Heart right ventricle (tissue), 16 donors: ENCODE measurements at regions of chr19 and their contacts with region 1.

Region 1: DNA sequence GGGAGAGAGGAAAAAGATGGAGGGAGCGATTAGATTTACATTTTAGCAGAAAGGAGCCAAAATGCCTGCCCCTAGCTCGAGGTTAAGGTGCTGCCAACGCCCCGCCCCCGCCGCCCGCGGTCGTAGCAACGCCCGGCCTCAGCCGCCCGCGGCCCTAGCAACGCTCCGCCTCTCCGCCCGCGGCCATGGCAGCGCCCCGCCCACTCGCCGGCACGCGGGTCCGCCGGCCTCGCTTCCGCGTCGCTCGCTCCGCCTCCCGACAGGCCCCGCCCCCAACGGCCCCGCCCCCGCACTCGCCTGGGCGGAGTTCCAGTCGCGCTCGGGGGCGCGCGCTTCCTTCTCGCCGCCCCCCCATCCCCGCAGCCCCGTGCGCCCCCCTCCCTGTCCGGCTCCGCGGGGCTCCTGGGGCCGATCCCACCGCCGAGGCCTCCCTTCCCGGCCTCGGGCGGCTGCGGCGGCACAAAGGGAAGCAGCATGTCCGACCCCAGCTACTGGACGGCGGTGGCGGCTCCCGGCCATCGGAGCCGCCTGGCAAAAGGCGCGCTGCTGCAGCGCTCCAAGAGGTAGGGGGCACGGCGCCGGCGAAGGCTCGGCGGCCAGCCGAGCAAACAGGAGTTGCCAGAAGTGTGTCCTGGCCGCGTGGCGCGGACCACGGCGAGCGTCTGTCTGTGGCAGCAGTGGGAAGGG is 20.3 kb downstream of the MAST3 start:
- DNase-seq: peak; percentile 88 to 94
- ATAC-seq: peak; percentile 89 to 96 (median 94)
- H3K4me3 ChIP-seq: peak overlapping the region; percentile 21 to 89 (median 78)
- H3K27ac ChIP-seq: peak overlapping the region in 9 of 10 donors; percentile 6 to 84 (median 71)
- H3K4me1 ChIP-seq: peaks cover 4 to 32% (median 22%) of the 10 kb centered on the region in 9 donors
- H3K27me3 ChIP-seq: no peaks in the 10 kb centered on the region
- CTCF ChIP-seq: peak in 2 of 9 donors; percentile 11 to 24

Region 2: GRCh38 chr19:18152444-18152816 is 34.6 kb after region 1 on chr19:
- intact Hi-C with region 1: loop called in 5 of 10 experiments (anchors 1 to 5 kb)
- DNase-seq: peak; percentile 97
- ATAC-seq: peak; percentile 52 to 87 (median 74)
- H3K4me3 ChIP-seq: peak overlapping the region; percentile 37 to 96 (median 89)
- H3K27ac ChIP-seq: peak overlapping the region; percentile 63 to 97 (median 94)
- H3K4me1 ChIP-seq: peaks cover 10 to 44% (median 35%) of the 10 kb centered on the region in 9 donors
- H3K27me3 ChIP-seq: no peaks in the 10 kb centered on the region
- CTCF ChIP-seq: peak; percentile 30 to 79 (median 63)

Region 3: DNA sequence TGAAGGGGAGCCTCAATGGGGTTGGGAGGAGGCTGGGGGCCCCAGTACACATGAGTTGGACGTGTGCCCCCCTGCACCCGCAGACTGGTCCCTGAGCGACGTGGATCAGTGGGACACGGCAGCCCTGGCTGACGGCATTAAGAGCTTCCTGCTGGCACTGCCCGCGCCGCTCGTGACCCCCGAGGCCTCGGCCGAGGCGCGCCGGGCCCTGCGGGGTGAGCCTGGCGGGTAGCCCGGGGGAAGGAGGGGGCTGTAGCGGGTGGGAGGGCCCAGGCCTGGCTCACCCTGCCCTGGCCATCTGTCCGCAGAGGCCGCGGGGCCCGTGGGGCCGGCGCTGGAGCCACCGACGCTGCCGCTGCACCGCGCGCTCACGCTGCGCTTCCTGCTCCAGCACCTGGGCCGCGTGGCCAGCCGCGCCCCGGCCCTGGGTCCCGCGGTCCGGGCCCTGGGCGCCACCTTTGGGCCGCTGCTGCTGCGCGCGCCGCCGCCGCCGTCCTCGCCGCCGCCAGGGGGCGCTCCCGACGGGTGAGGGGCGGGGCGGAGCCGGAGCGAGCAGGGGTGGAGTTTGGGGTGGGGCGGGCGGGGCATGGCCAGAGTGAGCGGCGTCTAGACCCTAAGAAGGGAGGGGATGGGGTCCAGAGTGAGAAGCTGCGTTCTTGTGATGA is 43.3 kb after region 1 on chr19:
- intact Hi-C with region 1: loop called in 7 of 10 experiments (anchors 2 to 10 kb)
- DNase-seq: peak in 1 of 2 donors; percentile 84
- ATAC-seq: peak; percentile 37 to 89 (median 71)
- H3K4me3 ChIP-seq: peak overlapping the region in 9 of 10 donors; percentile 30 to 58 (median 44)
- H3K27ac ChIP-seq: peak overlapping the region; percentile 57 to 89 (median 83)
- H3K4me1 ChIP-seq: peaks cover 20 to 43% (median 34%) of the 10 kb centered on the region in 9 donors
- H3K27me3 ChIP-seq: no peaks in the 10 kb centered on the region
- CTCF ChIP-seq: peak; percentile 45 to 93 (median 68)

Region 4: GRCh38 chr19:18167975-18168645 is 50.3 kb after region 1 on chr19:
- intact Hi-C with region 1: loop called in 8 of 10 experiments (anchors 2 to 10 kb)
- DNase-seq: peak in 1 of 2 donors; percentile 37
- ATAC-seq: peak; percentile 40 to 61 (median 50)
- H3K4me3 ChIP-seq: no peak overlapping the region
- H3K27ac ChIP-seq: peak overlapping the region in 1 of 10 donors; percentile 96
- H3K4me1 ChIP-seq: peaks cover 0 to 42% (median 12%) of the 10 kb centered on the region in 9 donors
- H3K27me3 ChIP-seq: no peaks in the 10 kb centered on the region
- CTCF ChIP-seq: peak; percentile 48 to 82 (median 70)

Region 5: GRCh38 chr19:18251587-18252369 is 133.9 kb after region 1 on chr19:
- intact Hi-C with region 1: loop called (anchors 2 to 10 kb)
- DNase-seq: peak; percentile 69 to 71
- ATAC-seq: peak; percentile 58 to 81 (median 72)
- H3K4me3 ChIP-seq: no peak overlapping the region
- H3K27ac ChIP-seq: no peak overlapping the region
- H3K4me1 ChIP-seq: peaks cover 0 to 10% (median 0%) of the 10 kb centered on the region in 9 donors
- H3K27me3 ChIP-seq: peaks cover 0 to 16% (median 10%) of the 10 kb centered on the region in 7 donors
- CTCF ChIP-seq: peak; percentile 89 to 94 (median 92)

Region 6: DNA sequence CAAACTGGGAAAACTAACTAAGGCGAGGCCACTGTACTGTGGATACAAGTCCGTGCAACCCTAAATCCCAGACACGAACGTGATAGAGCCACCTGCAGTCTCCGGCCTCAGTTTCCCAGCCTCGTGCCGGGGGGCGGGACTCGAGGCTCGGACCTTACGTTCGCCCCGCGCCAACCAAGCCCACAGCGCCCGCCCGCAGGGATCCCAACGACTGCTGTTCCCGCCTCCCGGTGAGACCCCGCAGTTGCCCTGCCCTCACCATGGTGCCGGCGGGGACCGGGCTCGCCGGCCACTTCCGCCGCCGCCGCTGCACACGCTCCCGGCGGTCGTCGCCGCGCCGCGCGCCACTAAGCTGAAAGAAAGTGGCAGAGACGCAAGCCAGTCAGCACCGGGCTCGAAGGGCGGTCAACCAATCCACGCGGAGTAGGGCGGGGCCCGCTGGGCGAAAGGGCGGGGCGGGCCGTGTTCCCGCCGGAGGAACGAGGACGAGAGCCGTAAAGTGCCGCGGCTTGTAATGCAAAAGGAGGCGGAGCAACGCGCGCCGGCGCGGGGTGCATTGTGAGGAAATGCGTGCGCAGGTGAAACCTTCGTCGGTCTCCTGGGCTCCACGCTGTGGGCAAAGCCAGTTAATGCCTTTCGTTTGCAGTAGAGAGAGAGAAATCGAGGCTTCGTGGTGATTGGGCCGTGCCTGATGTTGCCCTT is 205.1 kb after region 1 on chr19 and contains the start of gene LSM4:
- intact Hi-C with region 1: loop called in 1 of 10 experiments (anchors 10 kb)
- DNase-seq: peak; percentile 98
- ATAC-seq: peak; percentile 96 to 98 (median 97)
- H3K4me3 ChIP-seq: peak within 1 kb of the TSS; percentile 58 to 92 (median 78)
- H3K27ac ChIP-seq: peak within 1 kb of the TSS; percentile 63 to 98 (median 92)
- H3K4me1 ChIP-seq: peaks cover 0 to 62% (median 57%) of the 10 kb centered on the region in 9 donors
- H3K27me3 ChIP-seq: no peaks in the 10 kb centered on the region
- CTCF ChIP-seq: peak in 4 of 9 donors; percentile 12 to 42 (median 28)
- total RNA-seq, gene LSM4: 73.2 to 114 (median 93.3) TPM